CD8-positive, alpha-beta T cell (primary cell): ENCODE measurements at regions of chr1 and their contacts with region 1.

Region 1: DNA sequence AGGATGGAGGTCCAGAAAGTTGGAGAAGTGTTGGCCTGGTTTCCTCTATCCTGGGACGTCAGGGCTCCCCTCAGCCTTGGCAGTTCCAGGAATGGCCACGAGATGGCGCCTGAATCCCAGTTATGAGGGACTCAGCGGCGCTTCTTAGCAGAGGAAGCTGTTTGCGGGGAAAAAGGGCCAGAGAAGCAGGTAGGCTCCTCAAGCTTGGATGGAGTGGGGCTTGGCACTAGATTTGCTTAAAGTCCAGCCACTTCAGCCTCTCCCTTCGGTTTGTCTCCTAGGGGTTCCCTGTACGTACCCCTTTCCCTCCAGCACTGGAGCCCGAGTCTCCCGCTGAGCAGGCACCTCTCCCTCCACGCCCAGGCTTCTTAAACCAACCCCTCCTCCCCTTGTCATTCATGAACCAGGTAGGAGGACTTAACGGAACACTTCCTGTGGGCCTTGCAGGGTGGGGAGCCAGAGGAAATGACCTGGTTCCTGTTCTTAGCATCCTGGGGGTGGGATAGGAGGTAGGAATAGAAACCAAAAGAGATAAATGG is 32.0 kb upstream of the TENT5B start:
- DNase-seq: peak; percentile 80 to 95 (median 87)
- ATAC-seq: peak; percentile 92
- H3K4me3 ChIP-seq: peak overlapping the region; percentile 11 to 36
- H3K4me3 Mint-ChIP-seq: peak overlapping the region; percentile 55
- H3K27ac ChIP-seq: no peak overlapping the region
- H3K27ac Mint-ChIP-seq: no peak overlapping the region
- H3K4me1 ChIP-seq: peaks cover 13% of the 10 kb centered on the region
- H3K4me1 Mint-ChIP-seq: peaks cover 21% of the 10 kb centered on the region
- H3K27me3 ChIP-seq: peaks cover 0 to 6% of the 10 kb centered on the region in 2 experiments
- H3K27me3 Mint-ChIP-seq: no peaks in the 10 kb centered on the region
- CTCF ChIP-seq: peak; percentile 84

Region 2: GRCh38 chr1:27031235-27032118 is 13.2 kb before region 1 on chr1:
- CTCF ChIA-PET with region 1: interaction called, 85 read pairs
- POLR2A ChIA-PET with region 1: no interaction called
- intact Hi-C with region 1: no loop called
- DNase-seq: no peak
- ATAC-seq: no peak
- H3K4me3 ChIP-seq: no peak overlapping the region
- H3K4me3 Mint-ChIP-seq: no peak overlapping the region
- H3K27ac ChIP-seq: no peak overlapping the region
- H3K27ac Mint-ChIP-seq: no peak overlapping the region
- H3K4me1 ChIP-seq: no peaks in the 10 kb centered on the region
- H3K4me1 Mint-ChIP-seq: peaks cover 5% of the 10 kb centered on the region
- H3K27me3 ChIP-seq: no peaks in the 10 kb centered on the region
- H3K27me3 Mint-ChIP-seq: peaks cover 16% of the 10 kb centered on the region
- CTCF ChIP-seq: no peak

Region 3: DNA sequence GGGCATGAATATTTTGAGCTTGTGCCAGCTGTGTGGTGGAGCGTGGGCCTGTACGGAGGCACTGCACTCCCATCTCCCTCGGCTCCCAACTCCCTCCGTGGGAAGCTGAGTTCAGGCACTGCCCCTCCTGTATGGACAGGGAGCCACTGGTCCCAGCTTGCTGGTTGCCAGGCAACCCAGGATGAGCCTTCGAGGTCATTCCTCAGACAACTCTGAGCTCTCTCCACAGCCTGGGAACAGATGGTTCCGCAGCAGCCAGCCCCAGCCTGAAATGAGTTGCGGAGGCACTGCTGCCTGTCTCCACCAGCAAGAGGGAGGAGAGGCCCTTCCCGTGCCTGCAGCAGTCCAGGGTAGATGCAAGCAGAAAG is 26.4 kb after region 1 on chr1:
- CTCF ChIA-PET with region 1: interaction called, 11 read pairs
- POLR2A ChIA-PET with region 1: no interaction called
- intact Hi-C with region 1: no loop called
- DNase-seq: no peak
- ATAC-seq: no peak
- H3K4me3 ChIP-seq: no peak overlapping the region
- H3K4me3 Mint-ChIP-seq: no peak overlapping the region
- H3K27ac ChIP-seq: no peak overlapping the region
- H3K27ac Mint-ChIP-seq: no peak overlapping the region
- H3K4me1 ChIP-seq: no peaks in the 10 kb centered on the region
- H3K4me1 Mint-ChIP-seq: no peaks in the 10 kb centered on the region
- H3K27me3 ChIP-seq: no peaks in the 10 kb centered on the region
- H3K27me3 Mint-ChIP-seq: peaks cover 4% of the 10 kb centered on the region
- CTCF ChIP-seq: no peak

Region 4: DNA sequence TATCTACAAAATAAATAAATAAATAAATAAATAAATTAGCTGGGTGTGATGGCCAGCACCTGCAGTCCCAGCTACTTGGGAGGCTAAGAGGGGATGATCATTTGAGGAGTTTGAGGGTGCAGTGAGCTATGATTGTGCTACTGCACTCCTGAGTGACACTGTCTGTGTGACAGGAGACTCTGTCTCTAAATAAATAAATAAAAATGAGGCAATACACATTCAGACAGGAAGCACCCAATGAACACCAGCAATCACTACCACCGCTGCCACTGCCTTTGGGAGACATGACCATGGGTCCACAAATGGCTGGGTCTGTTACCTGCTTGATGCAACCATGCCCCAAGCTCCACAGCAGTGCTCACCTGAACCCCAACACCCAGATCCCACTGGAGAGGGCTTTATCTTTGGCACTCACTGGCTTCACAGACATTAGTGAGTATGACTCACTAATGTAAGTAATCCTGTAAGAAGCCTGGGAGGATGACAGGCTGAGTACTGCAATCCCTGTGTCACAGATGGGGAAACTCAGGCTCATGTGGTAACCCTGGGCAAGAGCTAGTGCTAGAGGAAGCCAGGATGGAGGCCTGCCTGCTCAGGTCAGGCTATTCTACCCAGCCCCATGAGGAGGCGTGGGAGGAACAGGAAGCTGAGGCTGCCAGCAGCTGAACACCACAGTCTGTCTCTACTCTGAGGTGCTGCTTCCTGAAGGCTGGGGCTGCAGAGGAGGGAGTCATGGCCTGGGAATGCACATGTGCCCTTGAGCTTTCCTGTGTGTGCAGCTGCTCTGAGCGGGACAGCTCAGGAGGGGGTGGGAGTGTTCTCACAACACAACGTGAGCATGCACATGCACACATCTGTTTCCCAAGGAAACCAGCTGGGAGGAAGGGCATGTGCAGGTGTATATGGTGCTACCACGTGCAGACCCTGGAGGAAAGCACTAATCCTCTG is 67.2 kb after region 1 on chr1:
- CTCF ChIA-PET with region 1: interaction called, 10 read pairs
- POLR2A ChIA-PET with region 1: no interaction called
- intact Hi-C with region 1: no loop called
- DNase-seq: peak; percentile 41 to 87 (median 72)
- ATAC-seq: peak; percentile 96
- H3K4me3 ChIP-seq: no peak overlapping the region
- H3K4me3 Mint-ChIP-seq: peak overlapping the region; percentile 69
- H3K27ac ChIP-seq: peak overlapping the region; percentile 1 to 78
- H3K27ac Mint-ChIP-seq: peak overlapping the region; percentile 92
- H3K4me1 ChIP-seq: peaks cover 45% of the 10 kb centered on the region
- H3K4me1 Mint-ChIP-seq: peaks cover 64% of the 10 kb centered on the region
- H3K27me3 ChIP-seq: no peaks in the 10 kb centered on the region
- H3K27me3 Mint-ChIP-seq: no peaks in the 10 kb centered on the region
- CTCF ChIP-seq: peak; percentile 49

Region 5: DNA sequence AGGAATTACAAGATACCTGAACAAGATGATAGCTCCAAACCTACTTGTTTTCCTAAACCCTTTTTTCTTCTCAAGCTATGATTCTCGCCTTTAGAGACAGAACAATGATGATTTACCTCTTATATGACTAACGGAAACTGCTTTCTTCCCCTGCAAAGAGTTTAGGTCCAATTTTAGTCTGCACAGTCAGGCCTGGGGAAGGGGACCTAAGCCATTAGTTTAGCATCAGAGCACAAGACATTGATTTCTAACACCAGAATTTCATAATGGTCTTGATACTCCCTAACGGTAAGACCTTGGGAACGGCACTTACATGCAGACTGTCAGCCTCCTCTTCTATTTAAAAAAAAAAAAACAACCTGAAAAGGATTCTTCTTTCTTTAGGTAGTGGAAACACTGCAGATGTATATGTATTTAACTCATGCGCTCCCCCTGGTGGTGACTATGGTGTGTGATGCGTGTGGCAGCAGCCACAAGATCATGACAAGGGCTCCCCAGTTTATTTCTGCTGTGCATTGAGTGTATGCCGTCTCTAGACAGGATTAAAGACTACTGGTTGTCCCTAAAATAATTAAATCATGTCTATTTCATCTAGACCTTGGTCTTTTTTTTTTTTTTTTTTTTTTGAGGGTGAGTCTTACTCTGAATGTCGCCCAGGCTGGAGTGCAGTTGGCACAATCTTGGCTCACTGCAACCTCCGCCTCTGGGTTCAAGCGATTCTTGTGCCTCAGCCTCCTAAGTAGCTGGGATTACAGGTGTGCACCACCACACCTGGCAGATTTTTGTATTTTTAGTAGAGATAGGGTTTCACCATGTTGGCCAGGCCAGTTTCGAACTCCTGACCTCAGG is 240.0 kb after region 1 on chr1:
- CTCF ChIA-PET with region 1: interaction called, 12 read pairs
- POLR2A ChIA-PET with region 1: no interaction called
- intact Hi-C with region 1: loop called (anchors 1 to 2 kb)
- DNase-seq: peak; percentile 79 to 94 (median 88)
- ATAC-seq: peak; percentile 98
- H3K4me3 ChIP-seq: no peak overlapping the region
- H3K4me3 Mint-ChIP-seq: no peak overlapping the region
- H3K27ac ChIP-seq: no peak overlapping the region
- H3K27ac Mint-ChIP-seq: no peak overlapping the region
- H3K4me1 ChIP-seq: no peaks in the 10 kb centered on the region
- H3K4me1 Mint-ChIP-seq: peaks cover 5% of the 10 kb centered on the region
- H3K27me3 ChIP-seq: no peaks in the 10 kb centered on the region
- H3K27me3 Mint-ChIP-seq: no peaks in the 10 kb centered on the region
- CTCF ChIP-seq: peak; percentile 87